Activated CD8-positive, alpha-beta T cell treated with anti-CD3 and anti-CD28 coated beads for 36 hours (primary cell): ENCODE measurements at regions of chr11 and their contacts with region 1.

Region 1: GRCh38 chr11:62665075-62665598 is at the starts of genes C11orf98 and CSKMT:
- DNase-seq: peak; percentile 96
- ATAC-seq: peak; percentile 89
- H3K4me3 Mint-ChIP-seq: peak within 1 kb of the TSS; percentile 98
- H3K27ac Mint-ChIP-seq: peak within 1 kb of the TSS; percentile 92
- H3K4me1 Mint-ChIP-seq: peaks cover 33% of the 10 kb centered on the region
- H3K27me3 Mint-ChIP-seq: no peaks in the 10 kb centered on the region
- CTCF ChIP-seq: no peak
- total RNA-seq, gene C11orf98: 108 TPM
- total RNA-seq, gene CSKMT: 37.1 to 43.6 TPM

Region 2: DNA sequence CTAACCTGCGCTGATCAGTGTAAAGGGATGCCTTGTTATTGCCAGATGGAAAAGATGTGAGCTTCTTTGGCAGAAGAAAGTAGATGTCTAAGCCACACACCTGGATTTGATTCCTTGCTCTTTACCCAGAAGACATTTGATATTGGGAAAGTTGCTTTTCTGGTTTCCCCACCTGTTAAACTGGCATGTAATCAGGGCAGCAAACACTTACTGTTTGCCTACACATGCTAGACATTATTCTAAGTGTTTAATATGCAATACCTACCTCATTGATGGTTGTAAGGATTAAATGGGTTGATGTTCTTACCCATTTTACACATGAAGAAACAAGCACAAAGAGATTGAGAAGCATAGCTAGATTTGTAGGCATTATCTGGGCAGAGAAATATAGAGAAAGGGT is 311.3 kb before region 1 on chr11:
- CTCF ChIA-PET with region 1: no interaction called
- POLR2A ChIA-PET with region 1: no interaction called
- intact Hi-C with region 1: no loop called
- DNase-seq: no peak
- ATAC-seq: no peak
- H3K4me3 Mint-ChIP-seq: no peak overlapping the region
- H3K27ac Mint-ChIP-seq: no peak overlapping the region
- H3K4me1 Mint-ChIP-seq: peaks cover 6% of the 10 kb centered on the region
- H3K27me3 Mint-ChIP-seq: no peaks in the 10 kb centered on the region
- CTCF ChIP-seq: no peak

Region 3: GRCh38 chr11:62556108-62556871 is 108.8 kb before region 1 on chr11:
- CTCF ChIA-PET with region 1: interaction called, 3 read pairs
- POLR2A ChIA-PET with region 1: interaction called, 11 read pairs
- intact Hi-C with region 1: no loop called
- DNase-seq: peak; percentile 95
- ATAC-seq: peak; percentile 68
- H3K4me3 Mint-ChIP-seq: peak overlapping the region; percentile 41
- H3K27ac Mint-ChIP-seq: peak overlapping the region; percentile 94
- H3K4me1 Mint-ChIP-seq: peaks cover 92% of the 10 kb centered on the region
- H3K27me3 Mint-ChIP-seq: no peaks in the 10 kb centered on the region
- CTCF ChIP-seq: no peak

Region 4: DNA sequence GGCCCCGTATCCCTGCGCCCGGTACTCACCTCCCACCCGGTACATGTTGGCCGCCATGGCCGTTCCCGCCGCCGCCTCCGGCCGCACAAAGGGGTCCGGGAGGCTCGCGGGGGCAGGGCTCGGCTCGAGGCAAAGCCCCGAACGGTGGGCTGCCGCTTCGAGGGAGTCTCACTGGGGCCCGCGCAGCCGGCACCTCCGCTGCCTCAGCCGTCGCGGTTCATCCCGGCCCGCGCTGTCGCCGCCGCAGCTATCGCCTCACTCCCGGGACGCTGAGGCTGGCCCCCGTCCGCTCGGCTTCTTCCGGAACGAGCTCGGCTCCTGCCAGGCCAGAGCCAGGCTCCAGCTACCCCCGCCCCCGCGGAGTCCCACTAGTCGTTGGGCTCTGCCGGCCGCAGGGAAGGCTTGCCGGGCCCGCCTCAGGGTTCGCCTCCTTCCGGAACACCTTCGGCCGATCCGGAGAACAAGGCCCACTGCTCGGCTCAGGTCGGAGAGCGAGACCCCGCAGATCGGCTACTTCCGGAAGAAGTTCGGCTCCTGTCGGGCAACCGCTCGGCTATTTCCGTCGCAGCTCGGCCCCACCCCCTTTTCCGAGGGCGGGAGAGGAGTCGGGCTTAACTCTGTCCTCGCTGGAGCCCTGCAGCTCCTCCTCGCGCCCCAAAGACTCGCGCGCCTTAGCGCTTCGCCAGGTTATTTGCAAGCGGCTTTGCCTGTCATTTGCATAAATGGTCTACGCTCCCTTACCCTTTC is 63.6 kb before region 1 on chr11 and contains the start of gene MTA2:
- CTCF ChIA-PET with region 1: interaction called, 4 read pairs
- POLR2A ChIA-PET with region 1: interaction called, 14 read pairs
- intact Hi-C with region 1: no loop called
- DNase-seq: peak; percentile 99
- ATAC-seq: peak; percentile 89
- H3K4me3 Mint-ChIP-seq: peak within 1 kb of the TSS; percentile 86
- H3K27ac Mint-ChIP-seq: peak within 1 kb of the TSS; percentile 95
- H3K4me1 Mint-ChIP-seq: peaks cover 43% of the 10 kb centered on the region
- H3K27me3 Mint-ChIP-seq: no peaks in the 10 kb centered on the region
- CTCF ChIP-seq: no peak
- total RNA-seq, gene MTA2: 159 to 164 TPM

Region 5: DNA sequence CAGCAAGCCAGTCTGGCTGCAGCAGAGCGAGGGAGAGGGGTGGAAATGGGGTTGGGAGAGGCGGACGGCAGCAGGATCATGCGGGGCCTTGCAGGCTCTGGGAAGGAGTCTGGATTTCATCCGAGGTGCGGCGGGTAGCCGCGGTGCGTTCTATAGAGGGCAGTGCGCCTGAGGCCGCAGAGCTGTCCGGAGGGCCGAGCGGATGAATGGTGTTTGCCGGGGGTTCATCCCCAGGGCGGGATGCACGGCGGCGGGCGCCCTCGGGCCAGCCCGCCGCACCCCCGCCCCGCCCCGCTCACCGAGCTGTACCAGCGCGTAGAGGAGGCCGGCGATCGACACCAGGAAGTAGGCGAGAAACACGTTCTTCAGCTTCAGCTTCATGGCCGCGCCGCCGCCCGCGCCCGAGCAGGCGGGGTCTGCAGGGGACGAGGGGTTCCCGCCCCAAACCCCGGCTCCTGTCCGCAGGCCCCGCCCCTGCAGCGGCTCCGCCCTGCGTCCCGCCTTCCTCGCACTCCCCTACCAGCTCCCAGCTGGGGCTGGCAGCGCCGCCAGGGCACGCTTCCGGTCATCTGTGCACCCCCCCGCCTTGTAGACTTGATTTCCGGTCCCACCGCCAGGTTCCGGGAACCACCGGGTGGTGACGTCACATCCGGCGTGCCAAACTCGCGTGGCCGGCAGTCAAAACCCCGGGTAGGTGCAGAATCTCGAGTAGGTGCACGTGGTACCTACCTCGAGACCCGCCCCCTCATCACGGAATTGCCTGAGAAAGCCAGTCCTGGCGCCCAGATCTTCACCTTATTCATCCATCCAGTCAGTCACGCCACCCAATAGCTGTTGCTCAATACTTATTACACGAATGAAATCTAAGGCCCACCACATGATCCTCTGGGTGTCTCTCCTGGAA is 43.3 kb before region 1 on chr11 and contains the start of gene B3GAT3:
- CTCF ChIA-PET with region 1: no interaction called
- POLR2A ChIA-PET with region 1: interaction called, 34 read pairs
- intact Hi-C with region 1: no loop called
- DNase-seq: peak; percentile 98
- ATAC-seq: peak; percentile 94
- H3K4me3 Mint-ChIP-seq: peak within 1 kb of the TSS; percentile 88
- H3K27ac Mint-ChIP-seq: peak within 1 kb of the TSS; percentile 91
- H3K4me1 Mint-ChIP-seq: peaks cover 24% of the 10 kb centered on the region
- H3K27me3 Mint-ChIP-seq: no peaks in the 10 kb centered on the region
- CTCF ChIP-seq: no peak
- total RNA-seq, gene B3GAT3: 59.1 to 61.4 TPM

Region 6: GRCh38 chr11:62652161-62653006 is 12.8 kb before region 1 on chr11:
- CTCF ChIA-PET with region 1: interaction called, 11 read pairs
- POLR2A ChIA-PET with region 1: interaction called, 263 read pairs
- intact Hi-C with region 1: no loop called
- DNase-seq: peak; percentile 48
- ATAC-seq: peak; percentile 4
- H3K4me3 Mint-ChIP-seq: peak overlapping the region; percentile 94
- H3K27ac Mint-ChIP-seq: peak overlapping the region; percentile 95
- H3K4me1 Mint-ChIP-seq: peaks cover 23% of the 10 kb centered on the region
- H3K27me3 Mint-ChIP-seq: no peaks in the 10 kb centered on the region
- CTCF ChIP-seq: no peak

Region 7: GRCh38 chr11:62694455-62695167 is 29.5 kb after region 1 on chr11:
- CTCF ChIA-PET with region 1: interaction called, 11 read pairs
- POLR2A ChIA-PET with region 1: interaction called, 9 read pairs
- intact Hi-C with region 1: no loop called
- DNase-seq: peak; percentile 87
- ATAC-seq: peak; percentile 84
- H3K4me3 Mint-ChIP-seq: no peak overlapping the region
- H3K27ac Mint-ChIP-seq: no peak overlapping the region
- H3K4me1 Mint-ChIP-seq: peaks cover 7% of the 10 kb centered on the region
- H3K27me3 Mint-ChIP-seq: no peaks in the 10 kb centered on the region
- CTCF ChIP-seq: peak; percentile 92